Activated naive CD4-positive, alpha-beta T cell treated with anti-CD3 and anti-CD28 coated beads for 36 hours (primary cell): ENCODE measurements at regions of chr17 and their contacts with region 1.

Region 1: GRCh38 chr17:56319517-56319916 is 166.2 kb downstream of the ANKFN1 start:
- DNase-seq: no peak
- H3K4me3 Mint-ChIP-seq: no peak overlapping the region
- H3K27ac Mint-ChIP-seq: no peak overlapping the region
- H3K4me1 Mint-ChIP-seq: no peaks in the 10 kb centered on the region
- H3K27me3 Mint-ChIP-seq: peaks cover 4% of the 10 kb centered on the region

Region 2: DNA sequence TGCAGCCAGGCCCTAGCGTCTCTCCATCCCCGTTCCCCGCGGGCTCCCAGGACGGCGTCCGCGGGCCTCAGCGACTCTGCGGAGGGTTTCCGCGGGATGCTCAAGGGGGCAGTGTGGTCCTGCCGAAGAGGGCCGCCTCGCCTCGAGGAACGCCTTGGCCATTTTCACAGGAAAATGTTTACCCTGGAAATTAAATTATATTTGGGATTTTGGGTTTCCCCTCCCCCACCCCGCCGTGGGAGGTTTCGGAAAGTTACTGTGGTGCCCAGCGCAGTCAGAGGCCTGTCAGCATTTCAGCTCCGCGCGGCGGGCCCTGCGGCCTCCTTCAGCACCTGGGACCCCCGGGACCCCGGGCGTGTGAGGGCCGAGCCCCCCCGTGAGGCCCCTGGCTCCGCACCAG is 474.1 kb before region 1 on chr17:
- CTCF ChIA-PET with region 1: interaction called, 4 read pairs
- intact Hi-C with region 1: loop called (anchors 5 kb)
- DNase-seq: peak; percentile 40
- H3K4me3 Mint-ChIP-seq: no peak overlapping the region
- H3K27ac Mint-ChIP-seq: no peak overlapping the region
- H3K4me1 Mint-ChIP-seq: no peaks in the 10 kb centered on the region
- H3K27me3 Mint-ChIP-seq: peaks cover 23% of the 10 kb centered on the region

Region 3: GRCh38 chr17:55996825-55997224 is 322.7 kb before region 1 on chr17:
- CTCF ChIA-PET with region 1: no interaction called
- intact Hi-C with region 1: loop called (anchors 1 kb)
- DNase-seq: no peak
- H3K4me3 Mint-ChIP-seq: no peak overlapping the region
- H3K27ac Mint-ChIP-seq: no peak overlapping the region
- H3K4me1 Mint-ChIP-seq: peaks cover 2% of the 10 kb centered on the region
- H3K27me3 Mint-ChIP-seq: peaks cover 17% of the 10 kb centered on the region

Region 4: GRCh38 chr17:56125830-56126819 is 193.4 kb before region 1 on chr17:
- CTCF ChIA-PET with region 1: interaction called, 17 read pairs
- intact Hi-C with region 1: loop called (anchors 1 kb)
- DNase-seq: peak; percentile 30
- H3K4me3 Mint-ChIP-seq: no peak overlapping the region
- H3K27ac Mint-ChIP-seq: no peak overlapping the region
- H3K4me1 Mint-ChIP-seq: no peaks in the 10 kb centered on the region
- H3K27me3 Mint-ChIP-seq: peaks cover 3% of the 10 kb centered on the region

Region 5: GRCh38 chr17:56608951-56609350 is 289.4 kb after region 1 on chr17:
- CTCF ChIA-PET with region 1: no interaction called
- intact Hi-C with region 1: no loop called
- DNase-seq: no peak
- H3K4me3 Mint-ChIP-seq: no peak overlapping the region
- H3K27ac Mint-ChIP-seq: no peak overlapping the region
- H3K4me1 Mint-ChIP-seq: peaks cover 24% of the 10 kb centered on the region
- H3K27me3 Mint-ChIP-seq: no peaks in the 10 kb centered on the region